ENCODE measurements at regions of chr5 and their contacts with region 1.

Region 1: GRCh38 chr5:40386289-40386688 is 293.4 kb upstream of the PTGER4 start:
- DNase-seq: peak; percentile 34
- H3K4me3 Mint-ChIP-seq: no peak overlapping the region
- H3K27ac Mint-ChIP-seq: peak overlapping the region; percentile 85
- H3K4me1 Mint-ChIP-seq: peaks cover 81% of the 10 kb centered on the region
- H3K27me3 Mint-ChIP-seq: no peaks in the 10 kb centered on the region

Region 2: GRCh38 chr5:39714036-39714698 is 672.1 kb before region 1 on chr5:
- CTCF ChIA-PET with region 1: no interaction called
- intact Hi-C with region 1: loop called (anchors 5 kb)
- DNase-seq: peak; percentile 66
- H3K4me3 Mint-ChIP-seq: no peak overlapping the region
- H3K27ac Mint-ChIP-seq: no peak overlapping the region
- H3K4me1 Mint-ChIP-seq: no peaks in the 10 kb centered on the region
- H3K27me3 Mint-ChIP-seq: no peaks in the 10 kb centered on the region

Region 3: DNA sequence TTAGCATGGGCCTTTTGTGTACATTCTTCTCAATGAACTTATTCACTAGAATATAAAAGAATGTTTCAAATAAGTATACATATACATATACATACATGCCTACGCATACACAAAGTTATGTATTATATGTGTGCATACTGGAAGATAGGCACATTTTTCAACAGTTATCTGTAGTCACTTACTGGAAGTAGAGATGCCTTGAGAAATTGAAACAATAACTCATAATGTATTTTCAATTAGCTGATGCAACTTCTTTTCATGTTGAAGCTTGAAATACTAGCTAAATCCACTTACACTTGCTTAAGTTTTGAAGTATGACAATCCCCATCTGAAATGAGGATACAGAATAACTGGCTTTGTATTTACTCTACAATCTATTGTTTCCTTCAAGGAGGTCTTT is 175.6 kb before region 1 on chr5:
- CTCF ChIA-PET with region 1: no interaction called
- intact Hi-C with region 1: loop called (anchors 1 kb)
- DNase-seq: no peak
- H3K4me3 Mint-ChIP-seq: no peak overlapping the region
- H3K27ac Mint-ChIP-seq: peak overlapping the region; percentile 98
- H3K4me1 Mint-ChIP-seq: peaks cover 63% of the 10 kb centered on the region
- H3K27me3 Mint-ChIP-seq: no peaks in the 10 kb centered on the region

Region 4: DNA sequence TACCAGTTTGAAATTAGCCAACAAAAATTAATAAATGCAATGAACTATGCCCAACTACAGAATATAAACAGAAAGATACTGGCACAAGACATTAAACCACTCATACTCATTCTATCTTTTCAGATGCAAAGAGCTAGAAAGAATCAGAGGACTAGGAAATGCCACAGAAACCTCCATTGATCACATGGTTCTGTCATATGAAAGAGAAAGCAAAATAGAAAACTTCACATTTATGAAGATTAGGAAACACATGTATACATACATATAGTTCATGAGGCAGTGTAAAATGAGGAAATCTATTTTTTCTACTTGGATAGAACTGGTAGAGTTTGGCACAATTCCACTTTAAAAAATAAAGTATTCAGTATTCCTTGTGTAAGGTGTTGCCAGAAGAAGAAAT is 18.3 kb after region 1 on chr5:
- CTCF ChIA-PET with region 1: interaction called, 17 read pairs
- intact Hi-C with region 1: loop called (anchors 1 kb)
- DNase-seq: no peak
- H3K4me3 Mint-ChIP-seq: peak overlapping the region; percentile 33
- H3K27ac Mint-ChIP-seq: peak overlapping the region; percentile 99
- H3K4me1 Mint-ChIP-seq: peaks cover 89% of the 10 kb centered on the region
- H3K27me3 Mint-ChIP-seq: no peaks in the 10 kb centered on the region

Region 5: DNA sequence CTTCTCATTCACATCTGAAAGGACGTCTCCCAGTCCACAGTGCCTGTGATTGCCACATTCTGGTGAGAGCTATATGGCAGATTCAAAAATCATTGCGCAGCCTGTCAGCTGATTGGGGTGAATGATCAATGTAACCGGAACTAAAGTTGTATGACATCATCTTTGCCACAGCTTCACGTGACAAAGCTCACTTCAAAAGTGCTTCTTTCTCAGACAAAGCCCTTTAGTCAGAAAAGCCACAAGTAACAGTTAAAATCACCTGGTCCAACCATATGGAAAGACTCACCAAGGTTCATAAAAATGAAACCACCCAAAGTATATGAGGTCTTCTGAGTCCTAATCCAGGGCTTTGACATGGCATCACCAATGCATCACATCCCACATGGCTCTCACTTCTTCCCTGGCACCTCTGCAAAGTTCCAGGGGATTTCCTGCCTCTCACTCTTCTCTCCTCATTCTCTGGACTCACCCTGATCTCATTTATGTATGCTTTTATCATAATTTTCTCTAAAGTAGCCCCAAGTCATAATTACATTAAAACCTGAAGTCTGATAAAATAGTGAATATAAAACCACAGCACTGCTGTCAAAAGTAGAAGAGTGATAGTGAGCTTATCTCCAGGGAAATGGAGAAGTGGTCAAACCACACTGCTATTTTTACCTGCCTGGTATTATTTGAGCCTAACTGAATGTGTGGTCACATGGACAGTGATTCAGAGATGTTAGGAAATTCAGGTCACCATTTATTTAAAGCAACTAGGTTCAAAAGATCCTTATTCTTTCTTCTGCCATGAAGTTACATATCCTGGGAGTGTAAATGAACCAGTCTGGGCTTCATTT is 100.4 kb after region 1 on chr5:
- CTCF ChIA-PET with region 1: interaction called, 3 read pairs
- intact Hi-C with region 1: loop called (anchors 1 kb)
- DNase-seq: peak; percentile 85
- H3K4me3 Mint-ChIP-seq: peak overlapping the region; percentile 1
- H3K27ac Mint-ChIP-seq: peak overlapping the region; percentile 92
- H3K4me1 Mint-ChIP-seq: peaks cover 83% of the 10 kb centered on the region
- H3K27me3 Mint-ChIP-seq: no peaks in the 10 kb centered on the region

Region 6: DNA sequence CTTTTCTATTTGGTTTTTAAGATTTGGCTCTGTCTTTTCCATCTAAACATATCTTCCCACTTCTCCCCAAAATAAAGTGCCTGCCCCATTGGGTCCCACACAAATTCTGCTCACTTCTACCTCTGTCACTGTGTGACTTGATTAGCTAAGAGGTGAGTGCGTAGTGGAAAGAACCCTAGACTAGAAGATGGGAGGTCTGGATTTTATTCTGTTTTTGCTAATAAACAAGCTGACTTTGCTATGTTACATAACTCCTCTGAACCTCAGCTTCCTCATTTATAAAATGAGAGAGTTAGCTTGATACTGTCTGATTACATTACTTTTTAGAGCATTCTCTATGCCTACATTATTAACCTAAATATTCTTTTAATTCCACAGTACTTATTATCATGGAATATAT is 242.1 kb after region 1 on chr5:
- CTCF ChIA-PET with region 1: no interaction called
- intact Hi-C with region 1: no loop called
- DNase-seq: no peak
- H3K4me3 Mint-ChIP-seq: no peak overlapping the region
- H3K27ac Mint-ChIP-seq: no peak overlapping the region
- H3K4me1 Mint-ChIP-seq: peaks cover 33% of the 10 kb centered on the region
- H3K27me3 Mint-ChIP-seq: no peaks in the 10 kb centered on the region

Region 7: GRCh38 chr5:40736103-40736875 is 350.0 kb after region 1 on chr5:
- CTCF ChIA-PET with region 1: no interaction called
- intact Hi-C with region 1: loop called (anchors 1 kb)
- DNase-seq: no peak
- H3K4me3 Mint-ChIP-seq: no peak overlapping the region
- H3K27ac Mint-ChIP-seq: no peak overlapping the region
- H3K4me1 Mint-ChIP-seq: peaks cover 26% of the 10 kb centered on the region
- H3K27me3 Mint-ChIP-seq: no peaks in the 10 kb centered on the region

Region 8: GRCh38 chr5:41071975-41072374 is 685.7 kb after region 1 on chr5:
- CTCF ChIA-PET with region 1: no interaction called
- intact Hi-C with region 1: no loop called
- DNase-seq: no peak
- H3K4me3 Mint-ChIP-seq: no peak overlapping the region
- H3K27ac Mint-ChIP-seq: no peak overlapping the region
- H3K4me1 Mint-ChIP-seq: no peaks in the 10 kb centered on the region
- H3K27me3 Mint-ChIP-seq: no peaks in the 10 kb centered on the region